ENCODE measurements at regions of chr5 and their contacts with region 1.

Region 1: GRCh38 chr5:28014779-28015178 is 976.4 kb upstream of the CDH9 start:
- DNase-seq: no peak
- H3K4me3 ChIP-seq: no peak overlapping the region
- H3K27ac ChIP-seq: no peak overlapping the region
- H3K4me1 ChIP-seq: no peaks in the 10 kb centered on the region
- H3K27me3 ChIP-seq: no peaks in the 10 kb centered on the region
- CTCF ChIP-seq: no peak
- EP300 ChIP-seq: no peak
- POLR2A ChIP-seq: no peak

Region 2: GRCh38 chr5:28027851-28028250 is 13.1 kb after region 1 on chr5:
- intact Hi-C with region 1: loop called in 1 of 4 experiments (anchors 1 kb)
- DNase-seq: no peak
- H3K4me3 ChIP-seq: no peak overlapping the region
- H3K27ac ChIP-seq: no peak overlapping the region
- H3K4me1 ChIP-seq: no peaks in the 10 kb centered on the region
- H3K27me3 ChIP-seq: no peaks in the 10 kb centered on the region
- CTCF ChIP-seq: no peak
- EP300 ChIP-seq: no peak
- POLR2A ChIP-seq: no peak